Activated CD4-positive, alpha-beta T cell treated with anti-CD3 and anti-CD28 coated beads for 36 hours (primary cell): ENCODE measurements at regions of chr22 and their contacts with region 1.

Region 1: GRCh38 chr22:32660292-32660691 is 141.2 kb upstream of the TIMP3 start:
- DNase-seq: peak; percentile 74
- ATAC-seq: peak; percentile 30
- H3K4me3 Mint-ChIP-seq: no peak overlapping the region
- H3K27ac Mint-ChIP-seq: no peak overlapping the region
- H3K4me1 Mint-ChIP-seq: no peaks in the 10 kb centered on the region
- H3K27me3 Mint-ChIP-seq: peaks cover 10% of the 10 kb centered on the region

Region 2: DNA sequence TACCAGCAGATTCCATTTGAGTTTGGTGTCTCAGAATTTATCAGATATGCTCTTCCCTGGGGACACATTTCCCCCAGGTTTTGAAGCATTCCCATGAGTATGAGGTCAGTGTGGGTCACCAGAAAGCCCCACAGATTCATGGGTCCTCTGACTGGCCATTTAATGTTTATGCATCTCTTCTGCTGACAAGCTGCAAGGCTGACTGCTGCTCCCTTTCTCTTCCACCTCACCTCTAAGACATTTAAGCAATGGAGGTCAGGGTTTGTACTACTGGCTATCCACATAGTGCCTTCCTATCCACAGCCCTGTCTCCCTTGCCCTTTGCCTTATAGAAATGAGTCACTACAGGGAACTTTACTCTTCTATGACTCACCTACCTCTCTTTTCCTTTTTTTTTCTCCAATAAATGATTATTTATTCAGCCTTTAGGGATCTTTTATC is 35.2 kb after region 1 on chr22:
- CTCF ChIA-PET with region 1: no interaction called
- POLR2A ChIA-PET with region 1: no interaction called
- intact Hi-C with region 1: no loop called
- DNase-seq: no peak
- ATAC-seq: no peak
- H3K4me3 Mint-ChIP-seq: no peak overlapping the region
- H3K27ac Mint-ChIP-seq: no peak overlapping the region
- H3K4me1 Mint-ChIP-seq: no peaks in the 10 kb centered on the region
- H3K27me3 Mint-ChIP-seq: peaks cover 15% of the 10 kb centered on the region

Region 3: DNA sequence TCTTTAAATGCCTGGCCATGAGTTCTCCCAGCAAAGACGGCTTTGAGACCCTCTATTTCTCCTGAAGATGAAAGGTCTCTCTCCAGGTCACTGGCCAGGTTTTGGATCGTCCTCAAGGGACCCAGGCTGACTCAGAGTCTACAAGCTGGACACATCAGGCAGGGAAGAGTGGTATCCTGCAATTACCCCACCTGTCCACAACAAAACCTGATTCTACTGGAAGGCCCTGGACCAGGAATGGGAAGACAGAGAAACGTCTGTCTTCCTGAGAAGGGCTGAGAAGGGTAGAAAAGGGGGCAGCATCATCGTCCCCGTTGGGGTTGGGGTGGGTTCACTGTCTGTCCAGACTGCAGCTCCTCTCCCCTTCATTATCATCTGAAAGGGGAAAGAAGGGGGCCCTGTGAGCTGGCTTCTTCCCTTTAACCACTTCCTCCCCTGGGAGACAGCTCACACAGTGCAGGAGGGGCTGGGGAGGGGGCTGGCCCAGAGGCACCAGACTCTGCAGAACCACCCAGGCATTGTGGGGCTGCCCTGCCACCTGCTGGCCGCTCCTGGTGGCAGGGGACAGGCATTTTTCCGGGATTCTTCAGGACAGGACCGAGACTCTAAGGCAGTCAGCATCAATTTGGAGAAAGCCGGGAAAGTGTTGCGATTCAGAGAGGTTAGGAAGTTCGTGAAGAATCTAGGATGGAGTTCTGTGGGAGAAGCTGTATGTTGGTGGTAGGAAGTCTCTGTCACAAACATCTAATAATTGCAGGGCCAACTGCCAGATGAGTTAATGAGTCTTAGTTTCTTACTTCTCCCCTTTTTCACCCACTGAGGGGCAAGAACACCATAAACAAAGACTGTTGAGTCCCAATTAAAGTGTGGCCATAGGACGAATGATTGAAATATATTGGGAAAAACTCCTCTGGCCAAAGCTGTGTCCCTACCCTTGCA is 340.3 kb after region 1 on chr22:
- CTCF ChIA-PET with region 1: no interaction called
- POLR2A ChIA-PET with region 1: no interaction called
- intact Hi-C with region 1: loop called in 1 of 2 experiments (anchors 2 kb)
- DNase-seq: peak; percentile 64
- ATAC-seq: no peak
- H3K4me3 Mint-ChIP-seq: no peak overlapping the region
- H3K27ac Mint-ChIP-seq: no peak overlapping the region
- H3K4me1 Mint-ChIP-seq: no peaks in the 10 kb centered on the region
- H3K27me3 Mint-ChIP-seq: no peaks in the 10 kb centered on the region